ENCODE measurements at regions of chr17 and their contacts with region 1.

Region 1: DNA sequence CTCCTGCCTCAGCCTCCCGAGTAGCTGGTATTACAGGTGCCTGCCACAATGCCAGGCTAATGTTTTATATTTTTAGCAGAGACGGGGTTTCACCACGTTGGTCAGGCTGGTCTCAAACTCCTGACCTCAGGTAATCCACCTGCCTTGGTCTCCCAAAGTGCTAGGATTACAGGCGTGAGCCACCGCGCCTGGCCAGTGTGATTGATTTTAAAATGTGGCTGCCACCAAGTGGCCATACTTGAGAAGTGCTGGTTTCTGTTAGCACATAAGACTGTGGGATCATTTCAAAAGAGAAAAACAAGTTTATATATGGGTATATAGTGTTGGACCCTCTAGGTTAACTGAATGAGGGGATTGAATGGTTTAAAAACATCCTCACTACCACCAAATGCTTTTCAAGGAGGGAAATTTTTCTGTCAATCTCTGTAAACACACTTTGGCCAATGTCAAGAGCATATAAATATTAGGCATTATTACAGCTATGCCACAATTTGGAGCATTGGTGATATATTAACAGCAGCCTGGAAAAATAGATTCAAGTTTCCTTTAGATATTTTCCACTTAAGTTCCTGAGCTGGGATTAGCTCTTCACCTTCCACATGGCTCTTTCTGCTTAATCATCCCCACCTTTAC is 13.5 kb upstream of the DHRS13 start:
- DNase-seq: peak in 3 of 5 donors; percentile 39 to 65 (median 49)
- H3K4me3 ChIP-seq: no peak overlapping the region
- H3K27ac ChIP-seq: no peak overlapping the region
- H3K4me1 ChIP-seq: peaks cover 0 to 4% (median 0%) of the 10 kb centered on the region in 3 donors
- H3K27me3 ChIP-seq: no peaks in the 10 kb centered on the region
- CTCF ChIP-seq: peak; percentile 67

Region 2: GRCh38 chr17:28763804-28764266 is 152.6 kb before region 1 on chr17:
- intact Hi-C with region 1: loop called (anchors 5 kb)
- DNase-seq: peak in 3 of 5 donors; percentile 74 to 82 (median 77)
- H3K4me3 ChIP-seq: no peak overlapping the region
- H3K27ac ChIP-seq: no peak overlapping the region
- H3K4me1 ChIP-seq: peaks cover 0 to 5% (median 0%) of the 10 kb centered on the region in 3 donors
- H3K27me3 ChIP-seq: no peaks in the 10 kb centered on the region
- CTCF ChIP-seq: peak; percentile 83

Region 3: GRCh38 chr17:29007955-29008361 is 91.5 kb after region 1 on chr17:
- intact Hi-C with region 1: no loop called
- DNase-seq: no peak
- H3K4me3 ChIP-seq: no peak overlapping the region
- H3K27ac ChIP-seq: no peak overlapping the region
- H3K4me1 ChIP-seq: peaks cover 0 to 4% (median 0%) of the 10 kb centered on the region in 3 donors
- H3K27me3 ChIP-seq: peaks cover 10% of the 10 kb centered on the region
- CTCF ChIP-seq: no peak

Region 4: DNA sequence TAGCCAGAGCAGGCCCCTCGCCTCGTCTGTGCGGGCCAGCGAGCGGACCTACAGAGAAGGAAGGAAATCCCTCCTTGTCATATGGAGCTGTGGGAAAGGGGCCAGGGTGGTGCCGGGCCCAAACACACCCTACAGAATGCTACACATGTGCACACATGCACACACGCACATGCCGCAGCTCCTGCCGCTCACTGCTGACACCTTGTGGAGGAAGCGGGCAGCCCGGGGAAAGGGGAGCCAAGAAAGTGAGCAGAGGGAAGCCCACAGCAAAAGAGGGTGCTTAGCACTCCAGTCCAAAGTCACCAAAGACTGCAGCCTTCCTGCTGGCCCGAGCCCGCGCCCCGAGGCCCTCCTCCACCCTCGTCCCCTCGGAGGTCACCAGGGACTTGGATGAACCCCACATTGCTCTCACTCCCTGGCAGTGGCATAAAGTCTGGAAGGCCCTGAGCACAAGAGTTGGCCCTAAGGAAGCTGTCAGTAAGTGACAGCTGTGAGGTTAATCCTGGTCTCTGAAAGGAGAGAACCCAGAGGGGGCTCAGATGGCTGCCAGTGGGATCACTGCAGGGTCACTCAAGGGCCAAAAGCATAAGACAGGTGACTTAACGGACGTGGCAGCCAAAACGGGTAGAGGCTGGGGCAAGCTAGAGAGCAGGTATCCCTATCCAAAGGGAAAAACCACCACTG is 195.5 kb after region 1 on chr17:
- intact Hi-C with region 1: no loop called
- DNase-seq: peak in 4 of 5 donors; percentile 72 to 86 (median 82)
- H3K4me3 ChIP-seq: no peak overlapping the region
- H3K27ac ChIP-seq: peak overlapping the region in 1 of 2 donors; percentile 23
- H3K4me1 ChIP-seq: peaks cover 0 to 19% (median 11%) of the 10 kb centered on the region in 3 donors
- H3K27me3 ChIP-seq: no peaks in the 10 kb centered on the region
- CTCF ChIP-seq: peak; percentile 90

Measured in kidney (tissue), 22 donors.